HepG2 (cell line): ENCODE measurements at regions of chrX and their contacts with region 1.

Region 1: GRCh38 chrX:40146262-40147125 is 48.7 kb upstream of the BCOR start:
- DNase-seq: no peak
- ATAC-seq: peak; percentile 61
- H3K4me3 ChIP-seq: peak overlapping the region; percentile 65 to 74 (median 66); a peak in 5 of 6 replicates
- H3K27ac ChIP-seq: peak overlapping the region; percentile 69
- H3K4me1 ChIP-seq: peaks cover 70% of the 10 kb centered on the region
- H3K27me3 ChIP-seq: no peaks in the 10 kb centered on the region
- CTCF ChIP-seq: no peak
- EP300 ChIP-seq: no peak
- POLR2A ChIP-seq: peak in 1 of 2 experiments; percentile 41; a peak in 1 of 4 replicates
- RAD21 ChIP-seq: no peak

Region 2: DNA sequence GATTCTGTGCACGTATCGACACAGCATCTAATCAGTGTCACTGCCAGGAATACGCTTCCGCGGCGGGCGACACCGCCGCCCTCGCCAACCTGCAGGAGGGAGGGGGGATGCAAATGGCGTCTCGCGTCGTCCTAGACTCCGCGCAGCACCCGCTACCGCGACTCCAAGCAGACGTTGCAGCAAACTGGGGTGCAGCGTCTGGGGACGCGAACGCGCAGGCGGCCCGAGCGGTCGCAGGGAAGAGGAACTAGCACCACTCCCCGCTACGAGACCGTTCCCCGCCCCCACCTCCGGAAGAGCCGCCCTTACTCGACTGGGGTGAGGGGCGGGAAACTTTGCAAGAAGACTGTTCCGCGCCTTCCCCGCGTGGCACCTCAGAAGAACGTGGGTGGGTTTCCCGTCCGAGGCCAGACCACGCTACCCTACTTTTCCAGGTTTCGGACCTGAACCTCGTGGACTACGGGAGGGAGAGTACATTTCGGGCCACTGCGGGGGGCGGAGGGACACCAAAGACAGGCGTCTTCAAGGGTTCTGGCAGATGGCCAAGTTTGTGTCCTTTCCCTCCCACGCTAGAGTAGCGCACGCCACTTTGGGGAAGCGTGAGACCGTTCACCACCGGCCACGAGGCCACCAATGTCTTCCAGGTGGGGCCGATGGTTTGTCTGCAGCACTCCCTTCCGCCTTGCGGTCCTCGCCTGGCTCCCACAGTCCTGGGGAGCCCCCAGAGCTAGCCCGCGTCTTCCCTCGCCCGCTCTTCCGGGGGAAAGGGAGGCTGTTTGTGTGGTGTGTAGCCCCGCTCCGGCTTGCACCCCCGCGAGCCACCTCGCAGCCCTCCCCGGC is 29.2 kb after region 1 on chrX:
- CTCF ChIA-PET with region 1: no interaction called
- POLR2A ChIA-PET with region 1: interaction called, 10 read pairs
- in situ Hi-C with region 1: no loop called
- intact Hi-C with region 1: no loop called
- DNase-seq: peak; percentile 47
- ATAC-seq: peak; percentile 39
- H3K4me3 ChIP-seq: peak overlapping the region; percentile 55 to 74 (median 64); a peak in 5 of 6 replicates
- H3K27ac ChIP-seq: peak overlapping the region; percentile 95
- H3K4me1 ChIP-seq: peaks cover 46% of the 10 kb centered on the region
- H3K27me3 ChIP-seq: no peaks in the 10 kb centered on the region
- CTCF ChIP-seq: 0 out of 2 replicates have a peak, but pooled peaks have one; percentile 5
- EP300 ChIP-seq: no peak
- POLR2A ChIP-seq: peak in 1 of 2 experiments; percentile 19; a peak in 2 of 4 replicates
- RAD21 ChIP-seq: no peak